HCT116 (cell line): ENCODE measurements at regions of chr3 and their contacts with region 1.

Region 1: GRCh38 chr3:1818770-1819169 is 279.9 kb upstream of the CNTN4 start:
- DNase-seq: no peak
- ATAC-seq: no peak
- H3K4me3 ChIP-seq: no peak overlapping the region
- H3K27ac ChIP-seq: no peak overlapping the region
- H3K4me1 ChIP-seq: no peaks in the 10 kb centered on the region
- H3K27me3 ChIP-seq: no peaks in the 10 kb centered on the region
- CTCF ChIP-seq: no peak
- POLR2A ChIP-seq: no peak
- RAD21 ChIP-seq: no peak

Region 2: GRCh38 chr3:1275495-1275894 is 543.3 kb before region 1 on chr3:
- CTCF ChIA-PET with region 1: no interaction called
- POLR2A ChIA-PET with region 1: no interaction called
- RAD21 ChIA-PET with region 1: no interaction called
- intact Hi-C with region 1: no loop called
- DNase-seq: no peak
- ATAC-seq: no peak
- H3K4me3 ChIP-seq: no peak overlapping the region
- H3K27ac ChIP-seq: no peak overlapping the region
- H3K4me1 ChIP-seq: no peaks in the 10 kb centered on the region
- H3K27me3 ChIP-seq: no peaks in the 10 kb centered on the region
- CTCF ChIP-seq: no peak; a peak in 1 of 6 replicates
- POLR2A ChIP-seq: no peak
- RAD21 ChIP-seq: no peak

Region 3: DNA sequence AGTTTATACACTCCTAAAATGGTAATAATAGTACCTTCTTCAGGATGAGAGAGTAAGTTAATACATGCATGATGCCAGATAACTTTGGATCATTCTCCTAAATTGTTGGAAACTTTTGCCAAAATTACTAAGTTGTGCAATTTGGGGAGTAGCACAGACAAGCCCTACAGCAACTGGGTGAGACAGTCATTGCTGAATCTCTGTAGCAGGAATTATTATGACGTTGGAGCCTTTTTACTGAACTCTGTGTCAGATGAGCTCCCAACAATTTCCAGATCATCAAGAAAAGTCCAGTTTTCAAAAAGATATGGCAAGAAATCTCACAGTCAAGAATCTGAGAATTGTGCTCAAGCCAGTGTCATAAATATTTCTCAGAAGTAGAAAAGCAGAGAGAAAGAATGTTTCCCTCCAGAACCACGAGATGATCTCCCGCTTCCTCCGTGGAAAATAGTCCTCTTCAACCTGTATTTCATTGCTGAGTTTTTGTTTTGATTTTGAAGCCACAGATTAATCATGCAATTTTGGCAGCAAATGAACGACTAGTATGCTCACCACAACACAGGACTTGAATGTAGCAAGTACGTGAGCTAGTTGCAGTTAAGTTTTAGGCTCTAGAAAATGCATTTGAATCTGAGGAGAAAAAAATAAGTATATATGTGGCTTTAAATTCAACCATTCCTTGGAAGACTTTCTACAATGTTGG is 240.5 kb before region 1 on chr3:
- CTCF ChIA-PET with region 1: no interaction called
- POLR2A ChIA-PET with region 1: no interaction called
- RAD21 ChIA-PET with region 1: no interaction called
- intact Hi-C with region 1: no loop called
- DNase-seq: no peak
- ATAC-seq: no peak
- H3K4me3 ChIP-seq: no peak overlapping the region
- H3K27ac ChIP-seq: no peak overlapping the region
- H3K4me1 ChIP-seq: no peaks in the 10 kb centered on the region
- H3K27me3 ChIP-seq: no peaks in the 10 kb centered on the region
- CTCF ChIP-seq: no peak
- POLR2A ChIP-seq: no peak
- RAD21 ChIP-seq: no peak

Region 4: DNA sequence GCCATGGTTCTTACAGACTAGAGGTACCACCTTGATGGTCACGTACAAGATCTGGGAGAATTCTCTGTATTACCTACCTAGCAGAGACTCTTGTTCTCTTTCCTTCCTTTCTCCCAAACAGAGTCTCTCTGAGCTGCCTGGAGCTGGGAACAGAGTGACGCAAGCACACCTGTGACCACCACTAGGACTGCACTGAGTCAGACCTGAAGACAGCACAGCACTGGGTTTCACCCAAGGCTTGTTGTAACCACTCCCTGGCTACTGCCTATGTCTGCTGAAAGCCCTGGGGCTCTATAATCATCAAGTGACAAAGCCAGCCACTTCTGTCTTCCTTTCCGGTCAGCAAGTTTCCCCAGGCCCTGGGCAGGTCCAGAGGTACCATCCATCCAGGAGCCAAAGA is 13.4 kb before region 1 on chr3:
- CTCF ChIA-PET with region 1: no interaction called
- POLR2A ChIA-PET with region 1: no interaction called
- RAD21 ChIA-PET with region 1: no interaction called
- intact Hi-C with region 1: no loop called
- DNase-seq: no peak
- ATAC-seq: no peak
- H3K4me3 ChIP-seq: no peak overlapping the region
- H3K27ac ChIP-seq: no peak overlapping the region
- H3K4me1 ChIP-seq: no peaks in the 10 kb centered on the region
- H3K27me3 ChIP-seq: no peaks in the 10 kb centered on the region
- CTCF ChIP-seq: no peak
- POLR2A ChIP-seq: no peak
- RAD21 ChIP-seq: no peak

Region 5: GRCh38 chr3:1870730-1871129 is 52.0 kb after region 1 on chr3:
- CTCF ChIA-PET with region 1: no interaction called
- POLR2A ChIA-PET with region 1: no interaction called
- RAD21 ChIA-PET with region 1: no interaction called
- intact Hi-C with region 1: loop called (anchors 10 kb)
- DNase-seq: no peak
- ATAC-seq: no peak
- H3K4me3 ChIP-seq: no peak overlapping the region
- H3K27ac ChIP-seq: no peak overlapping the region
- H3K4me1 ChIP-seq: no peaks in the 10 kb centered on the region
- H3K27me3 ChIP-seq: no peaks in the 10 kb centered on the region
- CTCF ChIP-seq: no peak
- POLR2A ChIP-seq: no peak
- RAD21 ChIP-seq: no peak